AG04449 (cell line): ENCODE measurements at regions of chr9 and their contacts with region 1.

Region 1: GRCh38 chr9:126965541-126966428 is 51.2 kb downstream of the RALGPS1 start:
- DNase-seq: no peak
- H3K4me3 ChIP-seq: no peak overlapping the region
- CTCF ChIP-seq: peak; percentile 91

Region 2: GRCh38 chr9:126611592-126612325 is 354.0 kb before region 1 on chr9:
- CTCF ChIA-PET with region 1: no interaction called
- POLR2A ChIA-PET with region 1: no interaction called
- DNase-seq: no peak
- H3K4me3 ChIP-seq: no peak overlapping the region
- CTCF ChIP-seq: peak; percentile 89

Region 3: DNA sequence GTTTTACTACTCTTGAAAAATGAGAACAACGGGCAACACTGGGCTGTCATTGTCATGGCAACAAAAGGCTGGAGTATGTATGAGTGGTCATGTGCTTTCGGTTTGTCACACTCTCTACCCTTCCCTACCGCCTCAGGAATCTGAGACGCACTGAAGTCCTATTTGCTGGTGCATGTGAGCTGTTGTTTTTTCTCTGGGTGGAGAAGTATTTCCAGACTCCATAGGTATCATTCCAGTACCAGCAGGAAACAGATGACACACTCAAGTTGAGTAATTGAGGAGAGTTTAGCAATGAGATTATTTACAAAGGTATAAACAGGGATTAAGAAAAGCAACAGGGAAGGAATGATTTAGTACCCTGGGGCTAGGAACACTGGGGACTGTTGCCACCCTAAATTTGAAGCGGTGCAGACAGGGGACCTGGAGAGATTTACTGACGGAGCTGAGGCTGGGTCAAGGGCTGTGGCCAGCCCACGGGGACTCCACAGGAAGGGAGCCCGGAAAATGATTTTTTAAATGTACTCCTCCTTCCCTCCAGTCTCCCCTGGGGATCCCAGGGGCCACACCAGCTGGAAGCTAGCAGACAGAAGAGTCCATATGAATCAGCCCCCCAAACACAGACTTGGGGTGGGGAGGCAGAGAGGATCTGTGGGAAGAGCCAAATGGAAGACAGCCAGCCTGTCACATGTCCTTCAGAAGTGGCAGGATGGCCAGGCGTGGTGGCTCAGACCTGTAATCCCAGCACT is 174.2 kb before region 1 on chr9:
- CTCF ChIA-PET with region 1: no interaction called
- POLR2A ChIA-PET with region 1: no interaction called
- DNase-seq: peak; percentile 57
- H3K4me3 ChIP-seq: no peak overlapping the region
- CTCF ChIP-seq: no peak

Region 4: GRCh38 chr9:126939821-126940221 is 26.0 kb before region 1 on chr9:
- CTCF ChIA-PET with region 1: interaction called, 40 read pairs
- POLR2A ChIA-PET with region 1: no interaction called
- DNase-seq: no peak
- H3K4me3 ChIP-seq: no peak overlapping the region
- CTCF ChIP-seq: no peak

Region 5: DNA sequence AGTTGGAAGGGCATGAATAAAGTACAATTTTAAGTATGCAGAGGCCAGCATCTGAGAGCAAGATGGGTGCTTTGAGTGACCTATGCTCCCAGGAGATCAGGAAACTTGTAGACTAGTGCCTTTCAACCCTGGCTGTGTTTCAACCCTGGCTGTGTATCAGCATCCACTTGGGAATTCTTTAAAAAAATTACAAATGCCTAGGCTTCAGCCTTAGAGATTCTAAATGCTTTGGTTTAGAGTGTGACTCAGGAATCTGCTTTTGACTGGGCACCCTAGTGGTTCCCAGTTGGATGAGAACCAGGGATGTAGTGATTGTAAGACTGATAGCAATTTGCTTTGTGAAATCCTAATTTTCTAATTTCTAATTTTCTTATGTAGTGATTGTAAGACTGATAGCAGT is 14.4 kb after region 1 on chr9:
- CTCF ChIA-PET with region 1: interaction called, 65 read pairs
- POLR2A ChIA-PET with region 1: no interaction called
- DNase-seq: no peak
- H3K4me3 ChIP-seq: no peak overlapping the region
- CTCF ChIP-seq: no peak

Region 6: GRCh38 chr9:127013597-127013996 is 47.8 kb after region 1 on chr9:
- CTCF ChIA-PET with region 1: interaction called, 12 read pairs
- POLR2A ChIA-PET with region 1: no interaction called
- DNase-seq: no peak
- H3K4me3 ChIP-seq: no peak overlapping the region
- CTCF ChIP-seq: no peak

Region 7: DNA sequence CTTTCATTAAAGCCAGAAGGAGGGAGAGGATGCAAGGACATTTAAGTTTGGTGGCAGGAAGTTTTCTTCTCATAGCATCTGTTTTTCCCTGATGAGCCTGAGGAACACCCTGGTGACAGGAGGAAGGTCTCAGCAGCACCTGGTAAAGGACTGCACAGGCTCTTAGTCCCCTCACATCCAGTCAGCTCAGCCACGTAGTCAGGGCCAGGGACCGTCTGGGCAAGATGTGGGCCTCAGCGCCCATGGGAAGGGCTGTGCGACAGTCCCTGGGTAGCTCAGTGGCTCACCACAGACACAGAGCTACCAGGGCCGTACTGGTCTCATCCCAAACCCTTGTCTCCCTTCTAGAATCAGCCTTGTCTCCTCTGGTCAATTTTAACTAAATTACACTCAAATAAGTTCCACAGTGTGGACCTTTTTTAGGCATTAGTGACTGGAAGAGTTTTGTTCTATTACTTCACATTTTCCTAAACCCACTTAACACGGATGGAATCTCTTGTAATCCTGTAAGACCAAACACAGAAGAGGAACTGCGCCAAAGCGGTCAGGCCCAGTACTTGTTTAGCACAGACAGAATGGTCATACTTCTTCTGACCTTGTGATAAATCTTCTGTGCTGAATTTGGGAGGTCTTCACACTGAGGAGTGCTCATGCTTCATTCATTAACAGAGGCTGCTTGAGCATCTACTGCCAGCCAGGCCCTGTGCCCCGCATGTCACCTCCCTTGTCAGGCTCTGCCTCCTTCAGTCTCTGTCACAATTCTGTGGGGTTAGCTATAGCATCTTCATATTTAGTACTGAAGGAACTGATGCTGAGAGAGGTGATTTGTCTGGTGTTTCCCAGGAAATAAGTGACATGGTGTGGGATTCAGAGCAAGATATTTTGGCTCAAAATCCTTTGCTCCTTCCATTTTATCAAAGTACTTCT is 65.3 kb after region 1 on chr9:
- CTCF ChIA-PET with region 1: no interaction called
- POLR2A ChIA-PET with region 1: no interaction called
- DNase-seq: no peak
- H3K4me3 ChIP-seq: no peak overlapping the region
- CTCF ChIP-seq: no peak

Region 8: GRCh38 chr9:127159325-127159801 is 193.6 kb after region 1 on chr9:
- CTCF ChIA-PET with region 1: interaction called, 11 read pairs
- POLR2A ChIA-PET with region 1: no interaction called
- DNase-seq: no peak
- H3K4me3 ChIP-seq: no peak overlapping the region
- CTCF ChIP-seq: peak; percentile 39

Region 9: DNA sequence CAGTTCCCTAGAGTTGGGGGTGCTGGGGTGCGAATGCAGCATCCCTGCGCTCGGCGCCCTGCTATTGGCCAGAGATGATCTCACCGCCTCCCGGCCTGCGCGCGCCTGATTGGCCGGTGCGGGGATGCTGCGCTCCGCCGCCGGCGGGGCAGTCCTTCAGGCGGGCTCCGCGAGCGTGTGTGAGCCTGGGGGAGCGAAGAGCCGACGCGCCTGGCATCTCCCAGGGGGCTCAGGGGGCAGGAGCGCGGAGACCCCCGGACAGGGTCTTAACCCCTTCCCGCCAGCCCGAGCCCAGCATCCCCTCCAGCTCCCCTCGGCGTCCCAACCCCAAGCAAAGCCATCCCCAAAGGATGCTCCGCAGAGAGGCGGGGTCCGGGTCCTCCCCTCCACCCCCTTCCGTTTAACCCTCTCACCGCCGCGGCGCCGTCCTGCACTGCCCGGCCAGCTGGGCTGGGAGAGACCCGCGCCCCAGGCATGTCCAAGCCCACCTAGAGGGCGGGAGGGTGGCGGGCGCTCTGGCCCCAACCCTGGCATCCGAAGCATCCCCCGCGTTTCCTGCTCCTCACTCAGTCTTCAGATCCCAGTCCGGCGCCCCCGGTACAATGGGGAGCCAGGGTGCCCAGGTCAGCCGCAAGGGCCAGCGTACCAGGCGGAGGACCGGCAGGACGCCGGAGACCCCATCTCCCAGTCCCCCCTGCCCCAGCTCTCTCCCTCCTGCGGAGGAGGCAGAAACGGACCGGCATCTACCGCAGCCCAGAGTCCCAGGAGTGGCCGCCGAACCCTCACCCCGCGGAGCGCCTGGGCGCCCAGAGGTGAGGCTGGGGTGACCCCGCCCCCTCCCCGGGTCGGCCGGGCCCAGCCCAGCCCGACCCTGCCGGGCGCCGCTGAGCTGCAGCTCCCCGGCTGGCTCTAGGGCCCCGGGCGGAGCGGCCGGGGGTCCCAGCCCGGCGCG is 788.6 kb after region 1 on chr9:
- CTCF ChIA-PET with region 1: no interaction called
- POLR2A ChIA-PET with region 1: no interaction called
- DNase-seq: no peak
- H3K4me3 ChIP-seq: no peak overlapping the region
- CTCF ChIP-seq: no peak